HEK293 (cell line): ENCODE measurements at regions of chr17 and their contacts with region 1.

Region 1: GRCh38 chr17:17356149-17356930 is 53.2 kb downstream of the NT5M start:
- H3K4me3 ChIP-seq: no peak overlapping the region
- H3K27ac ChIP-seq: no peak overlapping the region
- H3K4me1 ChIP-seq: no peaks in the 10 kb centered on the region
- CTCF ChIP-seq: peak; percentile 95

Region 2: DNA sequence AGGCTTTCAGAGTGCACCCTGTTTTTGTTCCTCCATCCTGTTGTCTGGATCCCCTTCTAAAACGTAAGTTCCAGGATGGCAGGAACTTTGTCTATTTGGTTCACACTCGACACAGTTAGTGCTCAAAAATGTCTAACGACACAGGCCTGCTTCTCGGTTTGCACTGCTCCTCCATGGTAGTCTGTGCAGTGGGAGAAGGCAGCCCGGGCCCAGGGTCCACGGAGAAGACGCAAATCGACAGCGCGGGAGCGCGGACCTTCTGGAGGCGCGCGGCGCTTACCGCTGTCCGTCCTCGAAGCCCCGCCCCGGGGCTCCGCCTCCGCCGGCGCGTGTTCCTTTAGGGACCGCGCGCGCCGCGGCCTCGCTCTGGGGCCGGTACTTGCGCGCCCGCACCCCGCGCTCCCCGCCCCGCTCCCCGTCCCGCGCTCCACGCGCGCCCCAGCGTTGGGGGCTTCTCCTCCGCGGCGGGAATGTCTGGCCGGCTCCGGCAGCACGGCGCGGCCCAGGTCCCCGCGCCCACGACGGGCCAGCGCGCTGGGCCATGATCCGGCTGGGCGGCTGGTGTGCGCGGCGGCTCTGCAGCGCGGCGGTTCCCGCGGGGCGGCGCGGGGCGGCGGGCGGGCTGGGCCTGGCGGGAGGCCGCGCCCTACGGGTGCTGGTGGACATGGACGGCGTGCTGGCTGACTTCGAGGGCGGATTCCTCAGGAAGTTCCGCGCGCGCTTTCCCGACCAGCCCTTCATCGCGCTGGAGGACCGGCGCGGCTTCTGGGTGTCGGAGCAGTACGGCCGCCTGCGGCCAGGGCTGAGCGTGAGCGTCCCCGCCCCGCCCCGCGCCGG is 53.1 kb before region 1 on chr17 and contains the start of gene NT5M:
- CTCF ChIA-PET with region 1: no interaction called
- POLR2A ChIA-PET with region 1: no interaction called
- H3K4me3 ChIP-seq: peak within 1 kb of the TSS; percentile 50
- H3K27ac ChIP-seq: peak within 1 kb of the TSS; percentile 62; the same call in 1 of the 2 replicates
- H3K4me1 ChIP-seq: no peaks in the 10 kb centered on the region; the same call in 1 of the 2 replicates
- CTCF ChIP-seq: no peak

Region 3: GRCh38 chr17:17313350-17313991 is 42.9 kb before region 1 on chr17:
- CTCF ChIA-PET with region 1: no interaction called
- POLR2A ChIA-PET with region 1: no interaction called
- H3K4me3 ChIP-seq: no peak overlapping the region
- H3K27ac ChIP-seq: no peak overlapping the region
- H3K4me1 ChIP-seq: peaks cover 4% of the 10 kb centered on the region
- CTCF ChIP-seq: no peak; the same call in 1 of the 2 replicates

Region 4: DNA sequence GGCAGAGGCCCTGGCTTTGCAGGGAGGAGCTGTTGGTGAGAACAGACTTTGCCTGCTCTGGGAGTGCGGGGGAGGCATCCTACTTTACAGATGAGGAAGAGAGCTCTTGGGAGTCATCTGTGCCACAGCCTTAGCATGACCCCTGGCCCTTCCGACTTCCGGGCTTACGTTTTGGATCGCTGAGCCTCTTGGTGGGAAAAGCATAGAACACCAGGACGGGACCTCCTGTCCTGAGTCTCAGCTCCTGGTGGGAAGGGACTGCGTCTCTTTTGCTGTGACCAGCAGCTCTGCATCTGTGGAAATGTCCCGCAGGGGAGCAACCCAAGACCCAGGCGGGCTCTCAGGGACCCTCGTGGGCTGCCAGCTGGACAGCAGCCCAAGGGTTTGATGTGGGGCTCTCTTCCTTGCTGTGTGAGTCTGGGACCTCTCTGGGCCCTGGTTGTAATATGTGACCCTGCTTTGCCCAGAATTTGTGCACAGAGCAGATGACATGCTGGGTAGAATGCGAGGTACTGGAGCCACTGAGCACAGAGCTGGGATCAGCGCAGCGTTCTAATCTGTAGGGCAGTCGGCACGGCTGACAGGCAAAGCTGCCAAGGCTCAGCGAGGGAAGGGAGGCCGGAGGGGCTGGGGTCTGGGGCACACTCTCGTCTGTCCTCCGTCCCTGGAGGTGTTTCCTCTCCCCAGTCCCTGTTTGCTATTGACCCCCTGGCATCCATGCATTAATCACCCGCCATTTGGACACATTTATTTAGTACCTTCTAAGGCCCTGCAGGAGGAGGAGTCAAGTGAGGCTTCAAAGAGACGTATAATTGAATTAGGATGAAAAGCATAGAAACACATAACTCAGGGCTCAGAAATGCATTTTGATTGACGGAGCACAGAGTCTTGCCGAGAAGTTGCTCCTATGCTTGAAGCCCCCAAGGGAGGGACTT is 10.9 kb after region 1 on chr17:
- CTCF ChIA-PET with region 1: interaction called, 25 read pairs
- POLR2A ChIA-PET with region 1: no interaction called
- H3K4me3 ChIP-seq: no peak overlapping the region
- H3K27ac ChIP-seq: no peak overlapping the region
- H3K4me1 ChIP-seq: no peaks in the 10 kb centered on the region
- CTCF ChIP-seq: no peak

Region 5: DNA sequence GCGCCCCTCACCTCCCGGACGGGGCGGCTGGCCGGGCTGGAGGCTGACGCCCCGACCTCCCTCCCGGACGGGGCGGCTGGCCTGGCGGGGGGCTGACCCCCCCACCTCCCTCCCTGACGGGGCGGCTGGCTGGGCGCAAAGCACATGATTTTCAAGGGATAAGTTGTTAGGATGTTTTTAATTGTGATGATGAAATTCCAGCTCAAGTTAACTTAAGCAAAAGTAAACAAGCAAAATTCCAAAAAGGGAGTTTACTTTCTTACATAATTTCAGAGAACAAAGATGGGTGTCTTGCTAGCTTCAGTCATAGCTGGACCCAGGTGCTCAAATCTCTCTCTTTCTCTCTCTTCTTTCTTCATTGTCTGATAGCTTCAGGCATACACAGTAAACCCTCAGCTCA is 86.8 kb after region 1 on chr17:
- CTCF ChIA-PET with region 1: no interaction called
- POLR2A ChIA-PET with region 1: no interaction called
- H3K4me3 ChIP-seq: no peak overlapping the region
- H3K27ac ChIP-seq: no peak overlapping the region
- H3K4me1 ChIP-seq: peaks cover 12% of the 10 kb centered on the region
- CTCF ChIP-seq: no peak

Region 6: DNA sequence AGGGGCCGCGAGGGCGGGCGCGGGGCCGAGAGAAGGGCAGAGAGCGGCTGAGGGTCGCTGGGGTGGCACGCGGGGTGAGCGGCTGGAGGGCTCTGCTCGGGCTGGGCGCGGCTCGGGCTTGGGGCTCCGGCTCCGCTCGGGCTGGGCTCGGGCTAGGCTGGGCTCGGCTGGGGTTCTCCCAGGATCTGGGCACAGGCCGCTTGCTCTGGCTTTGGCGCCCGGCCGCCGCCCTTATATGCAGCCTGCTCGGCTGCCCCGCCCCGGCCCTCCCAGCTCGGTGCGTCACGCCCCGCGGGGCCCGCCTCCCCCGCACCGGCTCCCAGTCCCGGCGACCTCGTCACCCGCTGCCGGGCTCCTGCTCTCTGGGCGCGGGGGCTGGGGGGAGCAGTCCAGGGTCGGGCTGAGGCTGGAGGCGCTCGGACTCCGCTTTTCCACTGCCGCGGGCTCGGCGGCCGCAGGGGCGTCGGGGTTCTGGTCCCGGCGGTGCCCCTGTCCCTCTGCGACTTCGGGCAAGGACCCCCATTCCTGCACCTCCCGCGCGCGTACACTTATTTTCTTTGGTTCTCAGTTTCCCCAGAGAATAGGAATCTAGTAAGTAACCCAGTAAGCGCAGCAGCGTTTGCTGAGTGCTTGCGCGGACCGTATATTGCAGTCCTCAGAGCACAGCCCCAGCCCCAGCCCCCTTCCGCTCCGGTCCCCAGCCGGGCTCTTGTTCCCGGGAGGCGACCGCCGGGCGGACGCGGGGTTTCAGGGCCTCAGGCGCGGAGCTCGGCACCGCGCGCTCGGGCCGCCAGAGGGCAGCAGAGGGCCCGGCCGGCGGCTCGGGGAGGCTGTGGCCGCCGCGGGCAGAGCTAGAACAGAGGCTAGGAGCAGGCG is 140.1 kb after region 1 on chr17 and contains the start of gene RASD1:
- CTCF ChIA-PET with region 1: interaction called, 32 read pairs
- POLR2A ChIA-PET with region 1: interaction called, 4 read pairs
- H3K4me3 ChIP-seq: peak within 1 kb of the TSS; percentile 64
- H3K27ac ChIP-seq: peak within 1 kb of the TSS; percentile 64
- H3K4me1 ChIP-seq: no peaks in the 10 kb centered on the region
- CTCF ChIP-seq: 0 out of 2 replicates have a peak, but pooled peaks have one; percentile 25

Region 7: GRCh38 chr17:17575360-17576251 is 219.3 kb after region 1 on chr17:
- CTCF ChIA-PET with region 1: interaction called, 79 read pairs
- POLR2A ChIA-PET with region 1: no interaction called
- H3K4me3 ChIP-seq: no peak overlapping the region
- H3K27ac ChIP-seq: no peak overlapping the region
- H3K4me1 ChIP-seq: no peaks in the 10 kb centered on the region
- CTCF ChIP-seq: no peak

Region 8: DNA sequence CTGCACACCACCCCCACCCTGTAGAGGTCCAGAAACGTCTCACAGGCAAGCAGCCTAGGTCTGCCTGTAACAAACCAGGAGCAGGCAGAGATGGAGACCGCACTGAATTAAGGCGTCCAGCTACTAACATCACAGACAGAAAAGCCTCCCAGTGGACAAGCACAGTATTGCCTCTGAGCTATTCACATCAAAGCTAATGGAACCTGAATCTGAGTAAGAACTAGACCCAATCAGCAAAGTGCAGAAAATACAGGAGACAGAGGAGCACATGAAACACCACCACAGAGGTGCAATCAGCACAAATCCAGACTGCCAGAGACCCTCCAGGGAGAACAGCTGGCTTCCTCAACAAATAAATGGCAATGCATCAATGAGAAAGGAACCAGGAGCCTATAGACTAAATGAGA is 257.4 kb after region 1 on chr17:
- CTCF ChIA-PET with region 1: interaction called, 27 read pairs
- POLR2A ChIA-PET with region 1: no interaction called
- H3K4me3 ChIP-seq: no peak overlapping the region
- H3K27ac ChIP-seq: no peak overlapping the region
- H3K4me1 ChIP-seq: no peaks in the 10 kb centered on the region
- CTCF ChIP-seq: peak; percentile 57

Region 9: GRCh38 chr17:17641621-17642409 is 285.5 kb after region 1 on chr17:
- CTCF ChIA-PET with region 1: interaction called, 161 read pairs
- POLR2A ChIA-PET with region 1: no interaction called
- H3K4me3 ChIP-seq: no peak overlapping the region
- H3K27ac ChIP-seq: no peak overlapping the region
- H3K4me1 ChIP-seq: no peaks in the 10 kb centered on the region
- CTCF ChIP-seq: peak; percentile 88

Region 10: DNA sequence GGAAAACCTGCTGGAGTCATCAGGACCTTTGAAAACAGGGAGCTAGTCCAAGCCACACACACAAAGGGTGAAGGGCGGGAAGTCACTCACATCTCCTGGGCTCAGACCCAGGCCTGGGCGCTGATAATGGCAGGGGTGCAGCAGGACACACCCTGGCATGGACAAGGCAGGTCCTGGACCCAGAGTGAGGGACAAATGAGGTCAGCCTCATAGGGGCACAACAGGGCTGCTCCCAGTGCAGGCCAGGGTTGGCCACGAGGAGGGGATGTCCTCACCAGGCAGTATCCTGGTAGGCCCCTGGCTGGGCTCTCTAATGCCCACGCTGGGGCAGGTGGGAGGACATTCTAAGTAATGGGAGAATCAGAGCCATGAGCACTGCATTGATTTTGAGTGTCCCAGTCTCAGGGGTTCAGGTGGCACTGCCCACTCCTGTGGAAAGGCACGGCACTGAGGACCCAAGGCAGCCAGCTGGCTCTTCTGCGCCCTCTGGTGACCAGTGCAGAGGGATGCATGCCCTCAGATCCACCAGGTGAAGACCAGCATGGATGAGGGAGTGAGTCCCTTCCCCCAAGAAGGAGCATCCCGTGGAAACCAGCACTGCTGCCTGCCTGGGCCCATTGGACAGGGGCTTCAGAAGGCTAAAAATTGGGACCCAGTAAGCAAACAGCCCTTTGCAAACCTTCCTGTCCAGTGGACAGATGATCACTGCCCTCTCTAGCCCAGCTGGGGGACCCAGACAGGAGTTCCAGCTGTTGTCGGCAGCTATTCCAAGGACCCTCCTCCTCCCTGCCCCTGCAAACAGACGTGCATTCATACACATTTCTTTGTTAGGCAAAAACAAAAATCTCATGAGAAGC is 503.8 kb after region 1 on chr17:
- CTCF ChIA-PET with region 1: interaction called, 11 read pairs
- POLR2A ChIA-PET with region 1: no interaction called
- H3K4me3 ChIP-seq: no peak overlapping the region
- H3K27ac ChIP-seq: no peak overlapping the region
- H3K4me1 ChIP-seq: no peaks in the 10 kb centered on the region; the same call in 1 of the 2 replicates
- CTCF ChIP-seq: peak; percentile 97